Left ventricle myocardium superior (tissue), 1 donor: ENCODE measurements at regions of chr15 and their contacts with region 1.

Region 1: DNA sequence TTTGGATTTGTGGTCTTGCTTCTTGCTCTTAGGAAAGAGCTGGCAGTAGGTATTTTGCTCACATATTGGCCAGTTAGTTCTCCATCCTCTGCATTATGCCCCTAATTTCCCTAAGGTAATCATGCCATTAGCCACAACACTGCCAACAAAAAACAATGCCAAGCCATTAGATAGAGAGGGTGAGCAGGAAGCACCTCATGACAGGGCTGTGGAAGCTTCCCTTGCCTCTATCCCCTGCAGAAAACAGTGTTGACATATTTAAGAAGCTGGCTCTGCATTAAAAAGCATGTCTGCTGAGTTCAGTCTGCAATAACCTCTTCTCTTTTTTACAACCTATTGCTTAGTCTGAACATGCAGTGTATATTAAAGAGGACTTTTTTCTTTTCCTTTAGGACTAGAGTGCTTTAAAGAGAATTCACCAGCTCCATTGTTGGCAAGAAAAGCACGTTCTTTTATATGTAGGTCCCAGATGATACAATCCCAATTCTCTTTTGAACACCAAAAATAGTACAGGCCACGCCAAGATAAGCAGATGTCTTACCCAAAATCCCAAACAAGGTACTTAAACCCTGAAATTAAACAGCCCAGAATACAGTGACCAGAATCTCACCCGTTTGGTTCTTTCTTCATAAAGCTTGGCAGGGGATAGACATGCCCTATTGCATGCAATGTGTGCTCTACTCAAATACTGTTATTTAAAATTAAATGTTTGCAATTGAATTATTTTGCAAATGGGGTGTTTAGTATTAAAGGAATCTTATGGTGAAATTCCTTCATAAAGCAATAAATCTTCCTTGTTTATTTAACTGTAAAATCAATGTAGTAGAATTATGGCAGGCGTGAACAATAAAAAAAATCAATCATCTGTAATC is 93.7 kb upstream of the UBE3A start:
- DNase-seq: no peak
- ATAC-seq: peak; percentile 98

Region 2: DNA sequence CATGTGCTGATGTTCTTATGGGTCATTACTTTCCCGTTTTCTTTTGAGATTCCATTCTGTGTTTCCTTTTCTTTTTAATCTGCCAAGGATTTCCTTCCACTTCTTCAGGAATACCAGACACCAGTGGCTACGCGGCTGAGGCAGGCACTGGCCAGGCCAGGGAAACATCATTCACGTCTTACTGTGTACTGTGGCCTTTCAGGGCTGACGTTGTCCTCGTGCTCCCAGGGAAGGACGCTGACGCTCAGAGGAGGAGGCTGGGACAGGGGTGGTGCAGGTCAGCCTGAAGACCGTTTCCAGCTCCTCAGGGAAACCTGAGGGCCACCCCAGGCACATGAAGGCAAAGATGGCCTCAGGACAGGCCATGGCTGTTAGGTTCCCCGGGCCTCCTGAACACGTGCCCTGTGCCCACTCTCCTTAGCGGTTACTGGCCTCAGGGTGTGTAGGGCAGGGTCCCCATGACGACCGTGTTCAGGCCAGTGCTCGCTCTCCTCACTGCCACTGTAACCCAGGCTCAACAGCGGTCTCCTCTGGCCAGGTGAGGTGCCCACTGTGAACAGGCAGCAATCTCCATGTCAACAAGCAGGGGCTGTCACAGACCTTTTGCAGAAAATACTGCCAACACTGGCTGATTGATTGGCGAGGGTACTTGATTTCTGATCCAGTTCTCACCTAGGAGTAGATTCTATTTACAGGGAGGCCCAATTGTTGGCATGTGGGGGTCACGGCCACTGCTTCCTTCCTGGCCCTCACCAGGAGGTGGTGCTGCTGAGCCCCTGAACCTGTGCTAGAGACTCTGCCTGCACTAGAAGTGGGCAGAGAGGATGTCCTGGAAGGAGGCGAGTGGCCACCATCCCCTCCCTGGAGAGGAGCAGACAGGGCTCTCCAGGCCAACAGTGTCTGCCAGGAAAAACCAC is 161.1 kb after region 1 on chr15:
- intact Hi-C with region 1: loop called (anchors 10 kb)
- DNase-seq: peak; percentile 61
- ATAC-seq: peak; percentile 62